Activated naive CD4-positive, alpha-beta T cell treated with anti-CD3 and anti-CD28 coated beads for 36 hours (primary cell): ENCODE measurements at regions of chr11 and their contacts with region 1.

Region 1: GRCh38 chr11:128302425-128303186 is 284.8 kb downstream of the ETS1 start:
- DNase-seq: peak; percentile 79
- H3K4me3 Mint-ChIP-seq: peak overlapping the region; percentile 74
- H3K27ac Mint-ChIP-seq: peak overlapping the region; percentile 93
- H3K4me1 Mint-ChIP-seq: peaks cover 80% of the 10 kb centered on the region
- H3K27me3 Mint-ChIP-seq: no peaks in the 10 kb centered on the region

Region 2: GRCh38 chr11:127056338-127056971 is 1246.2 kb before region 1 on chr11:
- CTCF ChIA-PET with region 1: no interaction called
- intact Hi-C with region 1: no loop called
- DNase-seq: no peak
- H3K4me3 Mint-ChIP-seq: no peak overlapping the region
- H3K27ac Mint-ChIP-seq: no peak overlapping the region
- H3K4me1 Mint-ChIP-seq: no peaks in the 10 kb centered on the region
- H3K27me3 Mint-ChIP-seq: no peaks in the 10 kb centered on the region

Region 3: GRCh38 chr11:128279866-128280265 is 22.7 kb before region 1 on chr11:
- CTCF ChIA-PET with region 1: no interaction called
- intact Hi-C with region 1: no loop called
- DNase-seq: no peak
- H3K4me3 Mint-ChIP-seq: no peak overlapping the region
- H3K27ac Mint-ChIP-seq: no peak overlapping the region
- H3K4me1 Mint-ChIP-seq: peaks cover 10% of the 10 kb centered on the region
- H3K27me3 Mint-ChIP-seq: no peaks in the 10 kb centered on the region

Region 4: DNA sequence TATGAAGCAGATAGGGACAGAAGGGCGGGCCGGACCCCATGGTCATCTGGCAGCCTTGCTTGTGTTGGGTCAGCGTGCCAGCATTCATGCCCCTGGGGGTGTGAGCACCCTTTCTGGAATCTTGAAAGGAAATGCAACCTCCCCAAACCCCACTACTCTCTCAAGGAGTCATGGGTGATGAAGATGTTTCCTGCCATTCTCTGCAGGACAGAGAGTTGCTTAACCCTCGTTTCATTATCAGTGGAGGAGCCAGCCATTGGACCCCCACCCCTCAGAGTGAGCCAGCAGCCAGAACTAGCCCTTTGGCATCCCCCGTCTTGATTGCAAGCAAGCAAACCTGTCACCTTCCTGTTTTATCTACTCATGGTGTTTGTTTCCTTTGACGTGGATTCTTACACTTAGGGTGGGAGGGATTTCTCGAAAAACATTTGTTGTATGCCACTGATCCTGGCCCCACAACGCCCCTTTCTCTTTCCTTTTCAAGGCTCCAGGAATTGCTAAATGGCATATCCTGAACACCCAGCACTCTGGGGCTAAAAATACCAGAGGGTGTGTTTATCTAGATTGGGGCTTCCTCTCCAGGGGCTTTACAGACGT is 26.4 kb after region 1 on chr11:
- CTCF ChIA-PET with region 1: interaction called, 35 read pairs
- intact Hi-C with region 1: loop called (anchors 1 kb)
- DNase-seq: peak; percentile 85
- H3K4me3 Mint-ChIP-seq: peak overlapping the region; percentile 33
- H3K27ac Mint-ChIP-seq: peak overlapping the region; percentile 92
- H3K4me1 Mint-ChIP-seq: peaks cover 72% of the 10 kb centered on the region
- H3K27me3 Mint-ChIP-seq: no peaks in the 10 kb centered on the region